PC-9 (cell line): ENCODE measurements at regions of chr19 and their contacts with region 1.

Region 1: GRCh38 chr19:55146078-55146704 is 2.8 kb downstream of the TNNT1 start:
- DNase-seq: peak; percentile 59 to 83
- H3K4me3 ChIP-seq: peak overlapping the region; percentile 67
- H3K27ac ChIP-seq: no peak overlapping the region
- H3K4me1 ChIP-seq: peaks cover 20% of the 10 kb centered on the region; the same call in 1 of the 2 replicates
- H3K27me3 ChIP-seq: peaks cover 4% of the 10 kb centered on the region; the same call in 1 of the 2 replicates
- CTCF ChIP-seq: peak; percentile 98

Region 2: GRCh38 chr19:54168174-54168917 is 977.8 kb before region 1 on chr19:
- CTCF ChIA-PET with region 1: no interaction called
- POLR2A ChIA-PET with region 1: interaction called, 21 read pairs
- intact Hi-C with region 1: no loop called
- DNase-seq: peak; percentile 69 to 91
- H3K4me3 ChIP-seq: no peak overlapping the region
- H3K27ac ChIP-seq: no peak overlapping the region
- H3K4me1 ChIP-seq: peaks cover 9% of the 10 kb centered on the region; the same call in 1 of the 2 replicates
- H3K27me3 ChIP-seq: no peaks in the 10 kb centered on the region
- CTCF ChIP-seq: peak; percentile 83

Region 3: GRCh38 chr19:55166530-55167268 is 20.5 kb after region 1 on chr19 and contains the start of gene DNAAF3:
- CTCF ChIA-PET with region 1: interaction called, 16 read pairs
- POLR2A ChIA-PET with region 1: interaction called, 10 read pairs
- intact Hi-C with region 1: no loop called
- DNase-seq: peak; percentile 96 to 99
- H3K4me3 ChIP-seq: peak within 1 kb of the TSS; percentile 70
- H3K27ac ChIP-seq: peak within 1 kb of the TSS; percentile 71
- H3K4me1 ChIP-seq: peaks cover 13% of the 10 kb centered on the region
- H3K27me3 ChIP-seq: no peaks in the 10 kb centered on the region
- CTCF ChIP-seq: no peak
- total RNA-seq, gene DNAAF3: 51.8 and 76.6 TPM in 2 replicates

Region 4: GRCh38 chr19:55258828-55259539 is 112.8 kb after region 1 on chr19 and contains the start of gene PPP6R1:
- CTCF ChIA-PET with region 1: interaction called, 6 read pairs
- POLR2A ChIA-PET with region 1: interaction called, 20 read pairs
- intact Hi-C with region 1: no loop called
- DNase-seq: peak; percentile 99 to 100
- H3K4me3 ChIP-seq: peak within 1 kb of the TSS; percentile 77
- H3K27ac ChIP-seq: peak within 1 kb of the TSS; percentile 86
- H3K4me1 ChIP-seq: peaks cover 42% of the 10 kb centered on the region
- H3K27me3 ChIP-seq: no peaks in the 10 kb centered on the region
- CTCF ChIP-seq: no peak
- total RNA-seq, gene PPP6R1: 136 and 159 TPM in 2 replicates

Region 5: GRCh38 chr19:55418185-55418584 is 272.0 kb after region 1 on chr19:
- CTCF ChIA-PET with region 1: interaction called, 6 read pairs
- POLR2A ChIA-PET with region 1: interaction called, 18 read pairs
- intact Hi-C with region 1: loop called (anchors 1 kb)
- DNase-seq: peak; percentile 74 to 79
- H3K4me3 ChIP-seq: no peak overlapping the region
- H3K27ac ChIP-seq: no peak overlapping the region
- H3K4me1 ChIP-seq: no peaks in the 10 kb centered on the region
- H3K27me3 ChIP-seq: peaks cover 33% of the 10 kb centered on the region
- CTCF ChIP-seq: peak; percentile 94

Region 6: DNA sequence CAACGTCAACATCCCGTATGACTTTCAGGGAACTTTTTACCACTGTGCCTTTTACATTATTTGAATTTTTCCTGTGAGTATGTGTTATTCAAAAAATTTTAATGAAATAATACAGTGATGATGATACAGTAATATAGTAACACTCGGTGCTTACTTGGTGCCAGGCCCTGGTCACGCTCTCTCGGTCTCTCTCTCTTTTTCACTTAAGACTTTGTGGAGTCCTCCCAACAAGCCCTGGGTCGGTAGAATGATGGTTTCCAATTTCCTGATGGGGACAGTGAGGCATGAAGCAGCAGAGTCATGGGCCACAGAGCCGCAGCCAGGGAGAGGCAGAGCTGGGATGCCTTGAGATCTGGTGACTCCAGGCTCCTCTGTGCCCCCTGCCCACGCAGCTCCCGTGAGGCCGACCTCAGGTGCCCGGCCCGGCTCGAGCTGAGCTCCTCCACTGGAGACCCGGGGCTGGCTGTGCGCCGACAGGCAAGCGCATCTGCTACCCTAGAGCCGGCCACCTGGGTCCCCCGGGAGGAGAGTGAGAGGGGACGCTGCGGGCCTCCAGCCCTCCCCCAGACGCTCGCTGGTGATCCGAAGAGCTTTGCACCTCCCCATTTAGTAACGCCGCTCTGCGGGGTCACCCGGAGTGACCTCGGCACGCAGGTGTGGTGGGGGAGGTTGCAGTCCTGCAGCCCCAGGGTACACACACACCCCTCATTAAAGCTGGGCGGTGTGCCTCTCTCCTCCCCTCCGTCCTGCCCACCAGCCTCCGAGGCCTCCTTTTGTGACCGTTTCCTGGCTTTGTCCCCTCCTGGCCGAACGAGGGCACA is 403.5 kb after region 1 on chr19:
- CTCF ChIA-PET with region 1: no interaction called
- POLR2A ChIA-PET with region 1: interaction called, 15 read pairs
- intact Hi-C with region 1: no loop called
- DNase-seq: peak; percentile 89 to 94
- H3K4me3 ChIP-seq: peak overlapping the region; percentile 54
- H3K27ac ChIP-seq: peak overlapping the region; percentile 96
- H3K4me1 ChIP-seq: peaks cover 63% of the 10 kb centered on the region
- H3K27me3 ChIP-seq: no peaks in the 10 kb centered on the region
- CTCF ChIP-seq: no peak

Region 7: GRCh38 chr19:55679343-55680257 is 533.4 kb after region 1 on chr19:
- CTCF ChIA-PET with region 1: no interaction called
- POLR2A ChIA-PET with region 1: no interaction called
- intact Hi-C with region 1: no loop called
- DNase-seq: no peak
- H3K4me3 ChIP-seq: no peak overlapping the region
- H3K27ac ChIP-seq: no peak overlapping the region
- H3K4me1 ChIP-seq: peaks cover 14% of the 10 kb centered on the region
- H3K27me3 ChIP-seq: no peaks in the 10 kb centered on the region
- CTCF ChIP-seq: no peak